Activated CD4-positive, alpha-beta T cell treated with anti-CD3 and anti-CD28 coated beads, Interleukin-2, amount 10 ng/mL, durations not matched to agents 7 days and 5 days (primary cell): ENCODE measurements at regions of chr10 and their contacts with region 1.

Region 1: DNA sequence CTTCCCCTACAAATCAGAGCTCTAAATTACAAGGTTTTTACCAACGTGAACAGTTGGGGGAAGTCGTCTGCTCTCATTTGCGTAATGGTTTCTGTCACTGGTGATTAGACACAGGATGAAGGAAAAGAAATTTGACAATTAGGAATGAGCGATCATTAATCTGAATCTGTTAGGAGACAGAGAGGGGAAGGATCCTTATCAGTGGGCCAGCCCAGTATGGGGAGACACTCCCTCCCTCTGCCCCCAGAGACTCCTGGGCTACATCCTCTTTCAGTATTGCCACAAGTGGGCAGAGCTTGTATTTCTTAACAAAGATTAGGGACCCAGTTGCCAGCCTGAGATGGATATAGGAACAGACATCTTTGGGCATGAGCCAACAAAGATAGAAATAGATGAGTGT is 15.5 kb downstream of the HIF1AN start:
- DNase-seq: no peak
- H3K4me3 Mint-ChIP-seq: no peak overlapping the region
- H3K27ac Mint-ChIP-seq: no peak overlapping the region
- H3K4me1 Mint-ChIP-seq: peaks cover 4% of the 10 kb centered on the region
- H3K27me3 Mint-ChIP-seq: no peaks in the 10 kb centered on the region

Region 2: DNA sequence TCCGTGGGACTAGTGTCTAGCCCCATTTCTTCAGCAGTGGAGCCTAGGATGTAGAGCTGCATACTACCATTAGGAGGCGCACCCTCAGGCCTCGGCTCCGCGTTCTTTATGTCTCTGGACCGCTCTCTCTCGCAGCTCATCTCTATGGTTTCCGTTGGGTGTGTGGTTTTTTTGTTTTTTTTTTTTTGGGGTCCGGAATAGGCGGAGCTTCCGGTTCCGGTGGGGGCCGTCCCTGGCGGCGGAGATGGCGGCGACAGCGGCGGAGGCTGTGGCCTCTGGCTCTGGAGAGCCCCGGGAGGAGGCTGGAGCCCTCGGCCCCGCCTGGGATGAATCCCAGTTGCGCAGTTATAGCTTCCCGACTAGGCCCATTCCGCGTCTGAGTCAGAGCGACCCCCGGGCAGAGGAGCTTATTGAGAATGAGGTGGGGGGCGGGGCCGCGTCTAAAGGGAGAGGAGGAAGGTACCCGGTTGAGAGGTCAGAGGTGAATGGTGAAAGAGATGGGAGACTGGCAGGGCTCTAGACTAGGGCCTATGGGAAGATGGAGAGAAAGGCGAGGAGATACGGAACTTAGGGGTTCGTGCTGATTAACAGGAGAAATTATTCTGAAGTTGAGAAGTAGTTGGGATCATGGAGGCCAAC is 15.4 kb before region 1 on chr10 and contains the start of gene HIF1AN:
- CTCF ChIA-PET with region 1: interaction called, 18 read pairs
- POLR2A ChIA-PET with region 1: interaction called, 3 read pairs
- DNase-seq: peak; percentile 93
- H3K4me3 Mint-ChIP-seq: no peak within 1 kb of the TSS
- H3K27ac Mint-ChIP-seq: peak within 1 kb of the TSS; percentile 61
- H3K4me1 Mint-ChIP-seq: peaks cover 12% of the 10 kb centered on the region
- H3K27me3 Mint-ChIP-seq: no peaks in the 10 kb centered on the region
- total RNA-seq, gene HIF1AN: 54.9 to 59.3 TPM

Region 3: GRCh38 chr10:100562008-100562711 is 11.0 kb after region 1 on chr10:
- CTCF ChIA-PET with region 1: interaction called, 10 read pairs
- POLR2A ChIA-PET with region 1: no interaction called
- DNase-seq: peak; percentile 81
- H3K4me3 Mint-ChIP-seq: no peak overlapping the region
- H3K27ac Mint-ChIP-seq: no peak overlapping the region
- H3K4me1 Mint-ChIP-seq: peaks cover 18% of the 10 kb centered on the region
- H3K27me3 Mint-ChIP-seq: peaks cover 32% of the 10 kb centered on the region

Region 4: DNA sequence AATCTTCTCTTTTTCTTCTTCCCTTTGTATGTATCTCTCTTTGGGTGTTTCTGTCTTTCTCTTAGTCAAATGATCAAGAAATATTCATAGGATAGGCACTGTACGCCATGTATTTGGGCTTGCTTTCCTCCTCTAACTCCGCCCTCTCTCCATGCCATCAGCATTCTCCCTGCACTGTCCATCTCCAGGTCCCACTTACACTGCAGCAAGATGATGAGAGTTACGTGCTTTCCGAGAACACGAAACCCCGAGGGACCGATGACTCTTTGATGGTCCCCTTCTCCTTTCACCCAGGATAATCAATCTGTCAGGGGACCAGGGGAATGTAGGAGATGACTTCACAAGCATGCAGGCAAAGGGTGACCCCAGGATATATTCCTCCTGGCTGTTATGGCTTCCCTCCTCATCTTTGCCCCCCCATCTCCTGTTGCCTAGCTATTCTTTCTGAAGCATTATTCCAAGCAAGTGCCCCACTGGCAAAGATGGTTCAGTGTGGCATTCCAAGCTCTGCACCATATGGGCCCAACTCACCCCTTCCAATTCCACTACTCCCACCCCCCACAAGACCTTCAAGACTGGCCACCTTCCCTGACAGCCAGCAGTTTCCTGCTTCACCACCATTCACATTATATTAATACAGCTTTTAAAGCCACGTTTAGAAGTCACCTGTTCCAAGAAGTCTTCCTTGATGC is 24.5 kb after region 1 on chr10:
- CTCF ChIA-PET with region 1: no interaction called
- POLR2A ChIA-PET with region 1: no interaction called
- DNase-seq: no peak
- H3K4me3 Mint-ChIP-seq: no peak overlapping the region
- H3K27ac Mint-ChIP-seq: no peak overlapping the region
- H3K4me1 Mint-ChIP-seq: no peaks in the 10 kb centered on the region
- H3K27me3 Mint-ChIP-seq: peaks cover 14% of the 10 kb centered on the region